PC-9 (cell line): ENCODE measurements at regions of chr6 and their contacts with region 1.

Region 1: GRCh38 chr6:78995946-78996345 is 82.1 kb downstream of the PHIP start:
- DNase-seq: no peak
- H3K4me3 ChIP-seq: no peak overlapping the region
- H3K27ac ChIP-seq: no peak overlapping the region
- H3K4me1 ChIP-seq: no peaks in the 10 kb centered on the region
- H3K27me3 ChIP-seq: no peaks in the 10 kb centered on the region
- CTCF ChIP-seq: no peak

Region 2: DNA sequence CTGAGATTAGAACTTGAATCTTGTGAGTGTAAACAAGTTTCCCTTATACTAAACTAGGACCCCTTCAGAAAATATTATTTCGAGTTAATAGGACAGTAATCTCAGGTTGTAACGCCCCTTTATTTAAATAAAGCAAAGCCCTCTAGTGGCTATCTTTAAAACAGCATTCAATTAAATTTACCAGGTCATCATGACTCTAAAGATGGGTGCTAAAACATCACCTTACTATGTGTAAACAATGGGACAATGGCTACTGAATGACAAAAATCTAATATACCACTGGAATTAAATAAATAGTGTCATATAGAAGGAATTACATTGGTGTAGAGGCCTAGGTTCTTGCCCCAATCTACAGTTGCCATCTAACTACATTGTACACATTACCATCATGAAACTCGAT is 384.0 kb before region 1 on chr6:
- CTCF ChIA-PET with region 1: no interaction called
- POLR2A ChIA-PET with region 1: no interaction called
- intact Hi-C with region 1: no loop called
- DNase-seq: peak in 1 of 2 experiments; percentile 36
- H3K4me3 ChIP-seq: no peak overlapping the region
- H3K27ac ChIP-seq: no peak overlapping the region
- H3K4me1 ChIP-seq: no peaks in the 10 kb centered on the region
- H3K27me3 ChIP-seq: no peaks in the 10 kb centered on the region
- CTCF ChIP-seq: peak; percentile 66

Region 3: GRCh38 chr6:78883651-78884050 is 112.3 kb before region 1 on chr6:
- CTCF ChIA-PET with region 1: no interaction called
- POLR2A ChIA-PET with region 1: no interaction called
- intact Hi-C with region 1: no loop called
- DNase-seq: no peak
- H3K4me3 ChIP-seq: no peak overlapping the region
- H3K27ac ChIP-seq: no peak overlapping the region
- H3K4me1 ChIP-seq: no peaks in the 10 kb centered on the region
- H3K27me3 ChIP-seq: no peaks in the 10 kb centered on the region
- CTCF ChIP-seq: no peak

Region 4: DNA sequence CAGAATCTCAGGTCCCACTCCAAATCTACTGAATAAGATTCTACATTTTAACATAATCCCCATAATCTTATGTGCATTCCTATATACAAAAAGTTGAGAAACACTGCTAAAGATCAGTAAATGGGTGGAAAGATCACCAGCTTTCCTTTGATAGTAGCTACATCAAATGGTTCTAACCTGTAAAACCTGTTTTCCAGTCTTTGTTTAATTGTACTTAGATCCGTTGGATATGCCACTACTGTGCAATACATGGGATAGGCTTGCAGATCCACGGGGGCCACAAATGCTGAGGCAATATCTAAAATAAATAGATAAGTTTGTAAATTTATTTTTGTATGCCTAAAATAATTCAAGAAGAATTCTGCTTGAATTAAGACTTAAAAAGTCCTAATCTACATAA is 34.4 kb before region 1 on chr6:
- CTCF ChIA-PET with region 1: no interaction called
- POLR2A ChIA-PET with region 1: no interaction called
- intact Hi-C with region 1: loop called (anchors 5 kb)
- DNase-seq: no peak
- H3K4me3 ChIP-seq: no peak overlapping the region
- H3K27ac ChIP-seq: no peak overlapping the region
- H3K4me1 ChIP-seq: no peaks in the 10 kb centered on the region
- H3K27me3 ChIP-seq: no peaks in the 10 kb centered on the region
- CTCF ChIP-seq: no peak

Region 5: DNA sequence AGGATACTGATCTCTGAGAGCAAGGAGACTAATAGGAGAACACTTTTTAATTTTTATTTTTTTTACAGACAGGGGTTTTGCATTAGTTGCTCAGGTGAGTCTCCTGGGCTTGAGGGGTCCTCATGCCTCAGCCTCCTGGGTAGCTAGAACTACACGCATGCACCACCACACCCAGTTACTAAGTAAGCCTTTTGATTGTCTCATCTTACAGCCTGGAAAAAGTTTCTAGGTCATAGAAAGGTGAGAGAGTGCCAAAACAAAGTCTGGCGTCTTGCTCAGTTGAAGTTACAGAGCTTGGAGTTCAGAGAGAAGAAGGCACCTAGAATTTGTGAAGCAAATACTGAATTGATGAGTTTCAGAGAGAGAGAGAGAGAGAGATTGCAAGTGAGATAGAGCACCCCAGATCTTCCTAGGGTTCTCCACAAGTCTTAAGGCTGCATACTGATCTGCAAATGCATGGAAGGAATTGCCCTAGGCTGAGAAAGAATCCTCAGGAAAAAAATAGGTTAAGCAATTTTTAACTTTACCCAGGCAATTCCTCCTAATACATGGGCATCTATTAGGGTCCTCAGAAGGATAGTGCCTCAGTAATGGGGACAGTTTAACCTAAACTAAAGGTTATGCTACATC is 119.7 kb after region 1 on chr6:
- CTCF ChIA-PET with region 1: no interaction called
- POLR2A ChIA-PET with region 1: no interaction called
- intact Hi-C with region 1: no loop called
- DNase-seq: no peak
- H3K4me3 ChIP-seq: no peak overlapping the region
- H3K27ac ChIP-seq: no peak overlapping the region
- H3K4me1 ChIP-seq: no peaks in the 10 kb centered on the region
- H3K27me3 ChIP-seq: no peaks in the 10 kb centered on the region
- CTCF ChIP-seq: no peak

Region 6: DNA sequence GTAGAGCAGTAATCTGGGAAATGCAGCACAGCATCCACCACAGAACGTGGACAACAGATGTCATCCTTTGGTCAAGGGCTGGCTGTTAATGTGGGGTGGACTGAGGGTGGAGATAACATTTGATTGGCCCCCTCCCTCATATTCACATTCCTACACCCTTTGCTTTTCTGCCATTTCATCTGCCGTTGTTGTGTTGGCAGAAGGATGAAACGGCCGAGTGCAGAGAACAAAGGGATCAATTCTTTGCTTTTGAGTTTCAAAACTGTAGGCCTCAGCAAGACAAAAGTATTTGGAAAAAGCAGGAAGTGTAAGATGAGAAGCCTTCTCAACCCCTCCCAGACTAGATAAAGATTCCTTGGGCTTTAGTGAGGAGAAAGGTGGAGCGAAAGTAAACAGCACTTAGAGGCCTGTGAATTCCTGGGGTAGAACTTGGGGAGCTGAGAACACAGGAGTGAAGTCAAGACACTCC is 156.4 kb after region 1 on chr6:
- CTCF ChIA-PET with region 1: no interaction called
- POLR2A ChIA-PET with region 1: no interaction called
- intact Hi-C with region 1: no loop called
- DNase-seq: no peak
- H3K4me3 ChIP-seq: no peak overlapping the region
- H3K27ac ChIP-seq: no peak overlapping the region
- H3K4me1 ChIP-seq: no peaks in the 10 kb centered on the region
- H3K27me3 ChIP-seq: no peaks in the 10 kb centered on the region
- CTCF ChIP-seq: no peak